ENCODE measurements at regions of chr6 and their contacts with region 1.

Region 1: DNA sequence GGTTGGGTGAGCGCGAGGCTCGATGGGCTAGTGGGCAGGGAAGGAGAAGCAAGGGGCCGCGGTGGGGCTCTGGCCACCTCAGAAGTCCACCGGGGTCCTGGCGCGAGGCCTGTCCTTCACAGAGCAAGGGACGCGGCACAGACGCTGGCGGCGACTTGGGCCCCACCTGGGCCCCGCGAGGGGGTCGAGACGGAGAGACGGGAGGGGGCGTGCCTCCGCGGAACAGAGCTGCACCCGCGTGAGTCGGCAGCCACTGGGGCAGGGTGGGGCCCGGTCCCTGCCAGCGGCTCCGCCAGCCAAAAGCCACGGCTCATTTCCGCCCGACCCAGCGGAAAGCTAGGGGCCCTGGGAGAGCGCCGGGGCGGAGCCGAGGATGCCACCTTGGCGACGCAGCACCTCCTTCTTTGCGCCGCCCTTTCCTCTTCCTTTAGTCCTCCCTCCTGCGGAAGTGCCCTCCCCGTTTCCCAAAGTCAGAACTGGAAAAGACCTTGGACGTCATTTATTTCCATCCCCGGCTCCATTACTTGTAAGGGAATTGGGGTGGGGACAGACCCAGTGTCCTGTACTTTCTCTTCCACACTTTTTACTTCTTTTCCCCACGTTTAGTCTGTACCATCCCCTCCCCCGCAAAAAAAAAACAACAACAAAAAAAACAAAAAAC is at the start of gene CUL7:
- DNase-seq: peak; percentile 97
- H3K4me3 Mint-ChIP-seq: peak within 1 kb of the TSS; percentile 96
- H3K27ac Mint-ChIP-seq: peak within 1 kb of the TSS; percentile 98
- H3K4me1 Mint-ChIP-seq: peaks cover 36% of the 10 kb centered on the region
- H3K27me3 Mint-ChIP-seq: no peaks in the 10 kb centered on the region
- CTCF ChIP-seq: no peak
- total RNA-seq, gene CUL7: 22.7 and 31.4 TPM in 2 replicates

Region 2: GRCh38 chr6:42978839-42979522 is 74.7 kb before region 1 on chr6 and contains the start of gene PEX6:
- CTCF ChIA-PET with region 1: interaction called, 3 read pairs
- POLR2A ChIA-PET with region 1: interaction called, 19 read pairs
- intact Hi-C with region 1: no loop called
- DNase-seq: peak; percentile 91
- H3K4me3 Mint-ChIP-seq: peak within 1 kb of the TSS; percentile 87
- H3K27ac Mint-ChIP-seq: peak within 1 kb of the TSS; percentile 91
- H3K4me1 Mint-ChIP-seq: peaks cover 15% of the 10 kb centered on the region
- H3K27me3 Mint-ChIP-seq: no peaks in the 10 kb centered on the region
- CTCF ChIP-seq: no peak
- total RNA-seq, gene PEX6: 25.8 and 34.0 TPM in 2 replicates

Region 3: GRCh38 chr6:43021270-43022047 is 32.2 kb before region 1 on chr6 and contains the start of gene RRP36:
- CTCF ChIA-PET with region 1: interaction called, 3 read pairs
- POLR2A ChIA-PET with region 1: interaction called, 53 read pairs
- intact Hi-C with region 1: no loop called
- DNase-seq: peak; percentile 68
- H3K4me3 Mint-ChIP-seq: peak within 1 kb of the TSS; percentile 92
- H3K27ac Mint-ChIP-seq: peak within 1 kb of the TSS; percentile 57
- H3K4me1 Mint-ChIP-seq: peaks cover 9% of the 10 kb centered on the region
- H3K27me3 Mint-ChIP-seq: no peaks in the 10 kb centered on the region
- CTCF ChIP-seq: no peak
- total RNA-seq, gene RRP36: 72.8 and 80.4 TPM in 2 replicates

Region 4: GRCh38 chr6:43075670-43076463 is 22.2 kb after region 1 on chr6 and contains the start of gene PTK7:
- CTCF ChIA-PET with region 1: no interaction called
- POLR2A ChIA-PET with region 1: interaction called, 60 read pairs
- intact Hi-C with region 1: no loop called
- DNase-seq: peak; percentile 47
- H3K4me3 Mint-ChIP-seq: peak within 1 kb of the TSS; percentile 81
- H3K27ac Mint-ChIP-seq: peak within 1 kb of the TSS; percentile 61
- H3K4me1 Mint-ChIP-seq: peaks cover 14% of the 10 kb centered on the region
- H3K27me3 Mint-ChIP-seq: no peaks in the 10 kb centered on the region
- CTCF ChIP-seq: no peak
- total RNA-seq, gene PTK7: 42.6 and 48.4 TPM in 2 replicates

Region 5: GRCh38 chr6:43181942-43182860 is 128.5 kb after region 1 on chr6 and contains the start of gene CUL9:
- CTCF ChIA-PET with region 1: no interaction called
- POLR2A ChIA-PET with region 1: interaction called, 16 read pairs
- intact Hi-C with region 1: no loop called
- DNase-seq: peak; percentile 69
- H3K4me3 Mint-ChIP-seq: peak within 1 kb of the TSS; percentile 85
- H3K27ac Mint-ChIP-seq: peak within 1 kb of the TSS; percentile 89
- H3K4me1 Mint-ChIP-seq: peaks cover 45% of the 10 kb centered on the region
- H3K27me3 Mint-ChIP-seq: no peaks in the 10 kb centered on the region
- CTCF ChIP-seq: no peak
- total RNA-seq, gene CUL9: 39.6 and 42.8 TPM in 2 replicates

Measured in MCF 10A (cell line).